ENCODE measurements at regions of chr14 and their contacts with region 1.

Region 1: GRCh38 chr14:52694761-52695480 is 437 bp downstream of the ERO1A start:
- DNase-seq: peak; percentile 26 to 80 (median 54)
- ATAC-seq: peak; percentile 67 to 73 (median 70)
- H3K4me3 ChIP-seq: peak overlapping the region; percentile 70 to 94
- H3K4me3 Mint-ChIP-seq: peak overlapping the region; percentile 98 to 100 (median 99)
- H3K27ac ChIP-seq: peak overlapping the region; percentile 71
- H3K27ac Mint-ChIP-seq: peak overlapping the region; percentile 97 to 99
- H3K4me1 ChIP-seq: peaks cover 18 to 21% of the 10 kb centered on the region in 2 experiments
- H3K4me1 Mint-ChIP-seq: peaks cover 42 to 50% (median 43%) of the 10 kb centered on the region in 3 donors
- H3K27me3 ChIP-seq: no peaks in the 10 kb centered on the region
- H3K27me3 Mint-ChIP-seq: no peaks in the 10 kb centered on the region

Region 2: GRCh38 chr14:52678591-52678990 is 16.3 kb before region 1 on chr14:
- CTCF ChIA-PET with region 1: interaction called in 1 of 2 experiments, 10 read pairs
- POLR2A ChIA-PET with region 1: no interaction called
- DNase-seq: peak in 1 of 35 experiments; percentile 48
- ATAC-seq: peak in 3 of 4 experiments; percentile 37 to 56 (median 49)
- H3K4me3 ChIP-seq: no peak overlapping the region
- H3K4me3 Mint-ChIP-seq: no peak overlapping the region
- H3K27ac ChIP-seq: no peak overlapping the region
- H3K27ac Mint-ChIP-seq: no peak overlapping the region
- H3K4me1 ChIP-seq: no peaks in the 10 kb centered on the region
- H3K4me1 Mint-ChIP-seq: peaks cover 0 to 11% (median 7%) of the 10 kb centered on the region in 3 donors
- H3K27me3 ChIP-seq: no peaks in the 10 kb centered on the region
- H3K27me3 Mint-ChIP-seq: no peaks in the 10 kb centered on the region

Measured in T-cell (primary cell).